Activated naive CD8-positive, alpha-beta T cell treated with anti-CD3 and anti-CD28 coated beads, Interleukin-2, amount 10 ng/mL, durations not matched to agents 7 days and 5 days (primary cell): ENCODE measurements at regions of chr4 and their contacts with region 1.

Region 1: DNA sequence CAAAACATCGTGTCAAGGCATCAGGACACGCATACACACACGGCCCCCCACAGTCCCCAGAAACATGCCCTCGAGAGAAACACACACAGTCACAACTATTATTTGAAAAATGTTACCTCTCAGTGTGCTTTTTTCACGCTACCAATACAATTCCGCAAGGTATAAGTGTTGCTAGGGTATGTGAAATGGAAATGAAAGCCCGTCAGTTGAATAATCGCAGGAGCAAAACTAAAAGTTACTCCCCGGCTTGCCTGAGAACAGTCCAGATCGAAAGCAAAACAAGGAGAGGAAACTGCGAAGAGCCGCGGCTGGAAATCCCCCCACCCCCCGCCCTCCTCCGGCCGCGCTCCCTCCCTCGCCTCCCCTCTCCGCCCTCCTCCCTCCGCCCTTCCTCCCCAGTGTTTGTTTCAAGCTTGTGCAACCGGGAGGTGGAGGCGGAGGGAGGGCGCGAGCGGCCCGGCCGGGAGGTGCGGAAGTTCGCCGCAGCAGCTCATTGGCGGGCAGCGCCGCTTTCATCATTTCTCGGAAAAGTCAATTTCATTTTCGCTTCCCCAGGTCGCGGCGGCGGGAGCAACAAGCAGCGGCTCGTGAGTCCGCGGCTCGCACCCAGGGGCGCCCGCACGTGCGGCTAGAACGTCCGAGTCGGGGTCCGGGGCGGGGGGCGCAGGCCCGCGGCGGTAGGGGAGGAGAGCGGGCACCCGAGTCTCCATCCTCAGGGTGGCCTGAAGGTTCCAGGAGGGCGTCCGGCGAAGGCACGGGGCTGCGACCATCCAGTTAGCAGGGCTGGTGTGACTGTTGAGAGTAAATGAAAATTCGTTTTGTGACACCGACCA is at the start of gene IRF2:
- DNase-seq: peak; percentile 91
- ATAC-seq: peak; percentile 77
- H3K4me3 Mint-ChIP-seq: peak within 1 kb of the TSS; percentile 93
- H3K27ac Mint-ChIP-seq: peak within 1 kb of the TSS; percentile 96
- H3K4me1 Mint-ChIP-seq: peaks cover 50% of the 10 kb centered on the region
- H3K27me3 Mint-ChIP-seq: no peaks in the 10 kb centered on the region
- total RNA-seq, gene IRF2: 72.0 to 73.2 TPM

Region 2: GRCh38 chr4:184263910-184264732 is 210.4 kb before region 1 on chr4:
- POLR2A ChIA-PET with region 1: interaction called, 36 read pairs
- DNase-seq: peak; percentile 91
- ATAC-seq: peak; percentile 60
- H3K4me3 Mint-ChIP-seq: peak overlapping the region; percentile 43
- H3K27ac Mint-ChIP-seq: peak overlapping the region; percentile 65
- H3K4me1 Mint-ChIP-seq: peaks cover 45% of the 10 kb centered on the region
- H3K27me3 Mint-ChIP-seq: peaks cover 7% of the 10 kb centered on the region

Region 3: GRCh38 chr4:184310171-184310567 is 164.3 kb before region 1 on chr4:
- POLR2A ChIA-PET with region 1: interaction called, 15 read pairs
- DNase-seq: no peak
- ATAC-seq: peak; percentile 55
- H3K4me3 Mint-ChIP-seq: peak overlapping the region; percentile 31
- H3K27ac Mint-ChIP-seq: peak overlapping the region; percentile 84
- H3K4me1 Mint-ChIP-seq: peaks cover 63% of the 10 kb centered on the region
- H3K27me3 Mint-ChIP-seq: no peaks in the 10 kb centered on the region

Region 4: DNA sequence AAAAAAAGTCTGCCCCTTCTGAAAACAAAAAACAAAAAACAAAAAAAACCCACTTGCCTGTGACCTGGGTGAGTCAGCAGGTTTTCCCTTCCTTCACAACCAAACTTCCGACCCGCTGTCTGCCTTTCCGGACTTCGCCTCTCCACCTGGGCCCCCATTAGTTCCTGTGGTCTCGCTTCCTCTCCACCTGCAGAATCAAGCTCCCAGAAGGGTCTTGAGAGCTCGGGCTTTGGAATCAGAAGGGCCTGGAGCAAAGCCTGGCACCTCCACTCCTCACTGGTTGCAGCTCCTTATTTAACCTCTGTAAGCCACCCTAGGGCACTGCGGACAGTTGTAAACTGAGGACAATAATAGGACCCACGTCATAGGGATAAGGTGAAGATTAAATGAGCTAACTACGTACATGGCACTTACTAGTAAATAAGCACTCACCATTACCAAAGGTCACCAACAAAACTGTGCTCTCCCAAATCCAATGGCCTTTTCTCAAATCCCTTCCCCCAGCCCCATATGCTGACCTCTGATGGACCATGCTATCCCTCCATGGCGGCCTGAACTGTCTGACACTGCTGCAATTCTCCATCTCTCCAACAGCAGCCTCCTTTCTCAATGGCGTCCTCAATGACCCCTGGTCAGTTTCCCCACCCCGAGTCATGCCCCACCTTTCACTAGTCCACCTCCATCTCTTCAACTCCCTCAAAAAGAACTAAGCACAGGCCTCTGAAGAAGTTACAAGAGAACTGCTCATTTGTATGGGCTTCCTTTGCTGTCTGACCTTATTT is 64.4 kb before region 1 on chr4:
- POLR2A ChIA-PET with region 1: interaction called, 12 read pairs
- DNase-seq: peak; percentile 49
- ATAC-seq: peak; percentile 56
- H3K4me3 Mint-ChIP-seq: peak overlapping the region; percentile 72
- H3K27ac Mint-ChIP-seq: peak overlapping the region; percentile 81
- H3K4me1 Mint-ChIP-seq: peaks cover 45% of the 10 kb centered on the region
- H3K27me3 Mint-ChIP-seq: no peaks in the 10 kb centered on the region

Region 5: GRCh38 chr4:184453365-184454160 is 20.9 kb before region 1 on chr4:
- POLR2A ChIA-PET with region 1: interaction called, 19 read pairs
- DNase-seq: no peak
- ATAC-seq: peak; percentile 97
- H3K4me3 Mint-ChIP-seq: peak overlapping the region; percentile 67
- H3K27ac Mint-ChIP-seq: peak overlapping the region; percentile 87
- H3K4me1 Mint-ChIP-seq: peaks cover 58% of the 10 kb centered on the region
- H3K27me3 Mint-ChIP-seq: no peaks in the 10 kb centered on the region

Region 6: DNA sequence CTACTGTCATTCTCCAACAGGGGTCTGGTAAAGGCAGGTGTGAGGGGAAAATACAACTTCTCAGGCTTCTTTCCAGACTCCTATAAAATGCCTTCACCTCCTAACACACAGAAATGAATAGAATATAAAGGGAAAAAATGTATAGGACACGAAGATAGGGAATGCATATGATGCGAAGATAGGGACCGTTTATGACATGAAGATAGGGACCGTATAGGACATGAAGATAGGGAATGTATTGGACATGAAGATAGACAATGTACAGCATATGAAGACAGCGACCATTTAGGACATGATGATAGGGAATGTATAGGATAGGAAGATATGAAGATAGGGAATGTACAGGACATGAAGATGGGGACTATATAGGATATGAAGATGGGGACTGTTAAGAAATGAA is 10.6 kb before region 1 on chr4:
- POLR2A ChIA-PET with region 1: no interaction called
- DNase-seq: no peak
- ATAC-seq: no peak
- H3K4me3 Mint-ChIP-seq: no peak overlapping the region
- H3K27ac Mint-ChIP-seq: no peak overlapping the region
- H3K4me1 Mint-ChIP-seq: peaks cover 42% of the 10 kb centered on the region
- H3K27me3 Mint-ChIP-seq: no peaks in the 10 kb centered on the region

Region 7: GRCh38 chr4:184514121-184514988 is 39.9 kb after region 1 on chr4:
- POLR2A ChIA-PET with region 1: interaction called, 23 read pairs
- DNase-seq: no peak
- ATAC-seq: peak; percentile 69
- H3K4me3 Mint-ChIP-seq: peak overlapping the region; percentile 61
- H3K27ac Mint-ChIP-seq: peak overlapping the region; percentile 67
- H3K4me1 Mint-ChIP-seq: peaks cover 28% of the 10 kb centered on the region
- H3K27me3 Mint-ChIP-seq: no peaks in the 10 kb centered on the region

Region 8: DNA sequence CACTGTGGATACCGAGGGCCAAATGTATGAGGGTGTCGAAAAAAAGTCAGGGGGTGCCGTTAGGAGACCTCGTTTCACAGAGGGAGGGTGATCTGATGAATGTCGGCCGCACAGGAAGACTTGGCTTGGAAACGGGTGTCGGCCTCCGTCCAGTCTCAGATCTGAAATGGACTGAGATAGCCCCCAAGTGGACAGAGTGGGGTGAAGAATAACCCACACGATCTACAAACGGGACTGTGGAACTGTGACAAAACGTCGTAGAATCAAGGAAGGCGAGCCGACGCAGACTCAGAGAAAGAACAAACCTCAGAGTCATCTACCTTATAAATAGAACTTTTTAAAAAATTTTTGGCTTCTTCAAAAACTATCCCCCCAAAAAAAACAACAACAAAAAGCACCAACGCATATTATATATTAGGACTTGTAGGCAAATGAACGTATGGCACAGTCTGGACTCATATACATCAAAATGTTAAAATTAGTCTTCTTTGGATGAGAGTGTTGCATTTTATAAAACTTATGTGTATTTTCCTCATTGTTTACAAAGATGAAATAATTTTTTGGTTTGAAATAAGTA is 63.6 kb after region 1 on chr4:
- POLR2A ChIA-PET with region 1: interaction called, 142 read pairs
- DNase-seq: peak; percentile 56
- ATAC-seq: peak; percentile 53
- H3K4me3 Mint-ChIP-seq: peak overlapping the region; percentile 90
- H3K27ac Mint-ChIP-seq: peak overlapping the region; percentile 89
- H3K4me1 Mint-ChIP-seq: peaks cover 35% of the 10 kb centered on the region
- H3K27me3 Mint-ChIP-seq: no peaks in the 10 kb centered on the region